Activated T-helper 1 cell treated with anti-CD3 and anti-CD28 coated beads, Interleukin-12 subunit alpha, Interleukin-12 subunit beta, Interleukin-2, Interleukin-4 antibody, amounts not matched to agents 30 ng/mL and 10 ng/mL and 1 ng/mL, durations not matched to agents 14 hours and 24 hours and 36 hours (primary cell): ENCODE measurements at regions of chr1 and their contacts with region 1.

Region 1: GRCh38 chr1:53945433-53946251 is at the start of gene IFT25:
- DNase-seq: peak; percentile 95
- H3K4me3 Mint-ChIP-seq: peak within 1 kb of the TSS; percentile 90
- H3K27ac Mint-ChIP-seq: peak within 1 kb of the TSS; percentile 89
- H3K4me1 Mint-ChIP-seq: peaks cover 61% of the 10 kb centered on the region
- H3K27me3 Mint-ChIP-seq: no peaks in the 10 kb centered on the region
- total RNA-seq, gene IFT25: 50.2 and 52.6 TPM in 2 replicates

Region 2: GRCh38 chr1:52365746-52366516 is 1579.7 kb before region 1 on chr1 and contains the start of gene CC2D1B:
- intact Hi-C with region 1: loop called (anchors 5 kb)
- DNase-seq: peak; percentile 100
- H3K4me3 Mint-ChIP-seq: peak within 1 kb of the TSS; percentile 90
- H3K27ac Mint-ChIP-seq: peak within 1 kb of the TSS; percentile 84
- H3K4me1 Mint-ChIP-seq: peaks cover 55% of the 10 kb centered on the region
- H3K27me3 Mint-ChIP-seq: no peaks in the 10 kb centered on the region
- total RNA-seq, gene CC2D1B: 40.5 and 42.3 TPM in 2 replicates

Region 3: DNA sequence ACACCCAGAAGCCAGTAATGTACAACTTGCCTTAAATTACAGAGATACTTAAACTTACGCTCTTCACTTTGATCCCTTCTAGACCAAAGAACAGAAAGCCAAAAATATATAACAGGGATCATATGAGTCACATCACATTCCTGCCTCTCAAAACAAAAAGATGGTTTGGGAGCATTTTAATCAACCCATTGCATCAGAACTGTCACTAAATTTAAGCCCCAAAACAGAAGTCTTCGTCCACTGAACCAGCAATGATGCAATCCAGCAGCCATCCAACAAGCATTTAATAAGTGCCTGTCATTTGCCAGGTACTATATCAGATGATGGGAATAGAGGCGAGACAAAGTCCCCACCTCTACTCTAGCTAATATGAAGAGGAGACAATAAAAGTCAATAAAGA is 164.0 kb before region 1 on chr1:
- intact Hi-C with region 1: loop called (anchors 2 kb)
- DNase-seq: no peak
- H3K4me3 Mint-ChIP-seq: no peak overlapping the region
- H3K27ac Mint-ChIP-seq: no peak overlapping the region
- H3K4me1 Mint-ChIP-seq: peaks cover 31% of the 10 kb centered on the region
- H3K27me3 Mint-ChIP-seq: no peaks in the 10 kb centered on the region

Region 4: DNA sequence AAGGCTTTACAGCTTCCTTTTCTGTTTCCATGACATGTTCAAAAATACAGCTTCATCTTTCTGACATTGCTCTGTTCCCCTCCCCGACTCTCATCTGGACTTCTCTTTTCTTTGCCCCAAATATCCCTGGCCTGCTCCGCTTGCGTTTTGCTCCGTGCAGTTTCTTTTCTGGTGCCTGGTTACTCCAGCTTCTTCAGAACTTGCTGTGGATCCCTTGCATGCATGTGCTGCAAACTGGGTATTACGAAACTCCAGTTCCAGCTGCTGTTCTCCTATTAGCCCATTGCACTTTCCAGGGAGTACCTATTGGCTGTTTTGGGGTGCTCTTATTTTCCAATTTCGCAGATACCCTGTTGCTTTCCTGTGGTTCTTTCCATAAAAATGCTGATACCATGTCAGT is 97.7 kb before region 1 on chr1:
- intact Hi-C with region 1: no loop called
- DNase-seq: no peak
- H3K4me3 Mint-ChIP-seq: no peak overlapping the region
- H3K27ac Mint-ChIP-seq: no peak overlapping the region
- H3K4me1 Mint-ChIP-seq: no peaks in the 10 kb centered on the region
- H3K27me3 Mint-ChIP-seq: peaks cover 3% of the 10 kb centered on the region

Region 5: GRCh38 chr1:53889304-53890298 is 56.0 kb before region 1 on chr1 and contains the start of gene YIPF1:
- intact Hi-C with region 1: loop called (anchors 1 kb)
- DNase-seq: peak; percentile 89
- H3K4me3 Mint-ChIP-seq: peak within 1 kb of the TSS; percentile 98
- H3K27ac Mint-ChIP-seq: peak within 1 kb of the TSS; percentile 96
- H3K4me1 Mint-ChIP-seq: peaks cover 26% of the 10 kb centered on the region
- H3K27me3 Mint-ChIP-seq: no peaks in the 10 kb centered on the region
- total RNA-seq, gene YIPF1: 14.7 and 15.2 TPM in 2 replicates

Region 6: GRCh38 chr1:54014009-54014629 is 68.5 kb after region 1 on chr1:
- intact Hi-C with region 1: no loop called
- DNase-seq: no peak
- H3K4me3 Mint-ChIP-seq: no peak overlapping the region
- H3K27ac Mint-ChIP-seq: no peak overlapping the region
- H3K4me1 Mint-ChIP-seq: no peaks in the 10 kb centered on the region
- H3K27me3 Mint-ChIP-seq: peaks cover 2% of the 10 kb centered on the region

Region 7: DNA sequence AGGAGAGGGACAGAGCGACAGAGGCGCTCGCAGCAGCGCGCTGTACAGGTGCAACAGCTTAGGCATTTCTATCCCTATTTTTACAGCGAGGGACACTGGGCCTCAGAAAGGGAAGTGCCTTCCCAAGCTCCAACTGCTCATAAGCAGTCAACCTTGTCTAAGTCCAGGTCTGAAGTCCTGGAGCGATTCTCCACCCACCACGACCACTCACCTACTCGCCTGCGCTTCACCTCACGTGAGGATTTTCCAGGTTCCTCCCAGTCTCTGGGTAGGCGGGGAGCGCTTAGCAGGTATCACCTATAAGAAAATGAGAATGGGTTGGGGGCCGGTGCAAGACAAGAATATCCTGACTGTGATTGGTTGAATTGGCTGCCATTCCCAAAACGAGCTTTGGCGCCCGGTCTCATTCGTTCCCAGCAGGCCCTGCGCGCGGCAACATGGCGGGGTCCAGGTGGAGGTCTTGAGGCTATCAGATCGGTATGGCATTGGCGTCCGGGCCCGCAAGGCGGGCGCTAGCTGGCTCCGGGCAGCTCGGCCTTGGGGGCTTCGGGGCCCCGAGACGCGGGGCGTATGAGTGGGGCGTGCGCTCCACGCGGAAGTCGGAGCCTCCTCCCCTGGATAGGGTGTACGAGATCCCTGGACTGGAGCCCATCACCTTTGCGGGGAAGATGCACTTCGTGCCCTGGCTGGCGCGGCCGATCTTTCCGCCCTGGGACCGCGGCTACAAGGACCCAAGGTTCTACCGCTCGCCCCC is 254.3 kb after region 1 on chr1 and contains the starts of genes CYB5RL and MRPL37:
- intact Hi-C with region 1: loop called (anchors 1 kb)
- DNase-seq: peak; percentile 89
- H3K4me3 Mint-ChIP-seq: peak within 1 kb of the TSS; percentile 90
- H3K27ac Mint-ChIP-seq: peak within 1 kb of the TSS; percentile 60
- H3K4me1 Mint-ChIP-seq: peaks cover 40% of the 10 kb centered on the region
- H3K27me3 Mint-ChIP-seq: no peaks in the 10 kb centered on the region
- total RNA-seq, gene CYB5RL: 8.3 and 11.3 TPM in 2 replicates
- total RNA-seq, gene MRPL37: 145 and 150 TPM in 2 replicates

Region 8: DNA sequence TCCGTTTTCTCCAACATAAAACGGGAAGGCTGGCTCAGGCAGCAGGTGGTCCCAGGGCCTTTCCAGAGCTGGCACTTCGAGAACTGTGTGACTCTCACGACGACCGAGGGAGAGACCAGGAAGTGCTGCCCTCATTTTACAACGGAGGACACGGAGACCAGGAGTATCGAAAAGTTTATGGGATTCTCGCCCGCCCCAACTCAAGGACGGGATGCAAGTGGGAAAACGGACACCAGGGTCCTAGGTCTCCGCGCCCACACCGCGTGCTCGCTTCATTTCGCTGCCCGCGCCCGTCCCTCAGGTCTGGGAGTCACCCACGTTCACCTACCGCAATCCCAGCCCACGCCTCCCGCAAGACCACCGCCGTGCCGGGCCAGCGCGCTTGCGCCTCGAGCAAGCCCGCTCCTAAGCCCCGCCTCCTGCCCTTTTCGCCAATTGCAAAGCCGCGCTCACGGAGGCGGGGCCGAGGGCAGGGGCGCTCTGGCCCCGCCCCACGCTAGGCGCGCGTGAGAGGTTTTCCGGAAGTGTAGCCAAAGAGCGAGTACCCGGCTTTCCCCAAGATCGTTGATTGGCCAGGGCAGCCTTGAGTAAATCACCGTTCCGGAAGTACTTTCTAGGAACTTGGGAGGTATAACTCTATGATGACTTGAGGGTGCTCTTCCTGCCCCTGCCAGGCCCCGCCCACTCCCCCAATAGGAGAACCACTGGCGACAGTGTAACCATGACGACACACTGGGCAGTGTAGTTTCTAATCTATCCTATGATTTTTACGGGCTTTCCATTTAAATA is 818.7 kb after region 1 on chr1 and contains the start of gene PARS2:
- intact Hi-C with region 1: loop called (anchors 1 kb)
- DNase-seq: peak; percentile 94
- H3K4me3 Mint-ChIP-seq: peak within 1 kb of the TSS; percentile 90
- H3K27ac Mint-ChIP-seq: peak within 1 kb of the TSS; percentile 95
- H3K4me1 Mint-ChIP-seq: peaks cover 32% of the 10 kb centered on the region
- H3K27me3 Mint-ChIP-seq: no peaks in the 10 kb centered on the region
- total RNA-seq, gene PARS2: 5.9 and 6.7 TPM in 2 replicates